ENCODE measurements at regions of chr14 and their contacts with region 1.

Region 1: GRCh38 chr14:53152890-53153701 is at the start of gene DDHD1:
- DNase-seq: peak; percentile 73 to 93 (median 85)
- ATAC-seq: peak; percentile 85
- H3K4me3 ChIP-seq: peak within 1 kb of the TSS; percentile 86 to 93
- H3K4me3 Mint-ChIP-seq: peak within 1 kb of the TSS; percentile 99
- H3K27ac ChIP-seq: peak within 1 kb of the TSS; percentile 77 to 85
- H3K27ac Mint-ChIP-seq: peak within 1 kb of the TSS; percentile 99
- H3K4me1 ChIP-seq: peaks cover 33% of the 10 kb centered on the region
- H3K4me1 Mint-ChIP-seq: peaks cover 49% of the 10 kb centered on the region
- H3K27me3 ChIP-seq: no peaks in the 10 kb centered on the region
- H3K27me3 Mint-ChIP-seq: no peaks in the 10 kb centered on the region
- CTCF ChIP-seq: no peak
- total RNA-seq, gene DDHD1: 40.1 to 44.3 TPM

Region 2: DNA sequence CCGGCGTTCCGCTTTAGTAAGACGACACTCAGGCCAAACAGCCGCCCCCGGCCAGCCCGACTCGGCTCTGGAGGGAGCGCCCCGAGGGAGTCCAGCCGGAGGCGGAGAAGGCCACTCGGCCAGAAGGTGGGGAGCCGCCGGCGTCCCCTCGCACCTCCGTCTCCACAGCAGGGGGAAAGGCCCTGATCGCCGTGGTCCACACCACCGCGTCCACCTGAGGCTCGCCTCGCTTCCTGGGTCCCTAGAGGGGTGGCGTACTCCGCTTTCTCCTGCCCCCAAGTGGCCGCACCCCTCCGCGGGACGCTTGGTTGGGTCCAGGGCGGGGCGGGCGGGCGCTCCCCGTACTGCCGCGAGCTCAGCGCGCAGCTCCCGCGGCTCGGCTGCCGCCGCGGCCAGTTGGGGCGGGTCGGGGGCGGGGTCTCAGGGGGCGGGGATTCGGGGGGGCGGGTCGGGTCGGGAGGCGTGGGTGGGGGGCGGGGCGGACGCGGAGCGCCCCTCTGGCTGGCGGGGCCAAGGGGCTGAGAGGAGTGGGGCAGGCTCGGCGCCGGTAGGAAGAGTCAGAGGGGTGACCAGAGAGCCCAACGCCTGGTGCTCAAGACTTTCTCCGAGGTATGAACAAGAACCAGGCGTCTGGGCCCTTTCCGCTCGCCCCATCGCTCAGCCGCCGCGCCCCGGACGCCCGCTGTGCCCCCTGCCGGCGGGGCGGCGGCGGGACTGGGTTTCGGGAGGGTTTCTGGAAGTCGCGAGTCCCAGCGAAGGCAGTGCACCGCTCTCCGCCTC is 1501.5 kb before region 1 on chr14 and contains the start of gene FRMD6:
- CTCF ChIA-PET with region 1: no interaction called
- POLR2A ChIA-PET with region 1: no interaction called
- intact Hi-C with region 1: loop called (anchors 5 to 10 kb)
- DNase-seq: peak; percentile 58 to 90 (median 76)
- ATAC-seq: peak; percentile 82
- H3K4me3 ChIP-seq: peak within 1 kb of the TSS; percentile 87 to 94
- H3K4me3 Mint-ChIP-seq: peak within 1 kb of the TSS; percentile 85
- H3K27ac ChIP-seq: peak within 1 kb of the TSS; percentile 55 to 73
- H3K27ac Mint-ChIP-seq: peak within 1 kb of the TSS; percentile 73
- H3K4me1 ChIP-seq: peaks cover 19% of the 10 kb centered on the region
- H3K4me1 Mint-ChIP-seq: peaks cover 17% of the 10 kb centered on the region
- H3K27me3 ChIP-seq: peaks cover 6 to 16% of the 10 kb centered on the region in 2 experiments
- H3K27me3 Mint-ChIP-seq: peaks cover 21% of the 10 kb centered on the region
- CTCF ChIP-seq: peak; percentile 70
- total RNA-seq, gene FRMD6: 2.4 to 3.5 TPM

Region 3: GRCh38 chr14:51939727-51940390 is 1213.2 kb before region 1 on chr14:
- CTCF ChIA-PET with region 1: no interaction called
- POLR2A ChIA-PET with region 1: no interaction called
- intact Hi-C with region 1: no loop called
- DNase-seq: peak in 1 of 9 experiments; percentile 42
- ATAC-seq: no peak
- H3K4me3 ChIP-seq: no peak overlapping the region
- H3K4me3 Mint-ChIP-seq: no peak overlapping the region
- H3K27ac ChIP-seq: peak overlapping the region in 1 of 2 experiments; percentile 47
- H3K27ac Mint-ChIP-seq: peak overlapping the region; percentile 39
- H3K4me1 ChIP-seq: no peaks in the 10 kb centered on the region
- H3K4me1 Mint-ChIP-seq: peaks cover 62% of the 10 kb centered on the region
- H3K27me3 ChIP-seq: no peaks in the 10 kb centered on the region
- H3K27me3 Mint-ChIP-seq: no peaks in the 10 kb centered on the region
- CTCF ChIP-seq: no peak

Region 4: DNA sequence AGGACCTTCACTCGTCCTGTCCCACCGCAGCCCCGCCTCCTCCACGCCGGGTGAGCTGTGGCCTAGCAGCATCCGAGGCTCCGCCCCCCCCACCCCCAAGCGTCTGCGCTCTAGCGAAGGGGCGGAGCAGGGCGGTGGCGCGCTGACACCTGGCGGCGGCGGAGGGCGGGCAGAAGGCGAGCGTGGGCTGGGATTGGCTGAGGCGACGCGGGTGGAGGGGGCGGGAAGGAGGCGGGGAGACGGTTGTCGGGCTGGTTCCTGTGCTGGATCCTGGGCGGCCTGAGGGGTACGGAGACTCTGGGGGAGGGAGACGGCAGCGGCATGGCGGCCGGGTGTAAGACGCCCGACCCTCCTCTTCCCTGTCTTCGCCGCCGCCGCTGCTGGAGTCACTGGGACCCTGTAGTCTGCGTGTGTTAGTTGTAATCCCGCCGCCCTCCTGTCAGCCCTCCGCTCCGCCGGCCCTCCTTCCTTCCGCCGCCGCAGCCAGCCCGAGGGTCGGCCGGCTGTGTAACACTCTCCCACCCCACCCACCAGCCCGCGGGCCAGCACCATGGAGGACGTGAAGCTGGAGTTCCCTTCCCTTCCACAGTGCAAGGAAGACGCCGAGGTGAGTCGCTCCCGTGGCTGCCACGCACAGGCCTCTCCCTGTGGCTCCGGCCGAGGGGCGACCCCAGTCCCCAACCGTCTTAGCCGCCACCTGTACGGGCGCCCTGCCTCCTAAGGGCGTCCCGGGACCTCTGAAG is 423.0 kb before region 1 on chr14 and contains the start of gene STYX:
- CTCF ChIA-PET with region 1: no interaction called
- POLR2A ChIA-PET with region 1: no interaction called
- intact Hi-C with region 1: loop called in 1 of 2 experiments (anchors 10 kb)
- DNase-seq: peak; percentile 97 to 99 (median 98)
- ATAC-seq: peak; percentile 96
- H3K4me3 ChIP-seq: peak within 1 kb of the TSS; percentile 87 to 98
- H3K4me3 Mint-ChIP-seq: peak within 1 kb of the TSS; percentile 89
- H3K27ac ChIP-seq: peak within 1 kb of the TSS; percentile 86
- H3K27ac Mint-ChIP-seq: peak within 1 kb of the TSS; percentile 93
- H3K4me1 ChIP-seq: peaks cover 17% of the 10 kb centered on the region
- H3K4me1 Mint-ChIP-seq: peaks cover 35% of the 10 kb centered on the region
- H3K27me3 ChIP-seq: no peaks in the 10 kb centered on the region
- H3K27me3 Mint-ChIP-seq: no peaks in the 10 kb centered on the region
- CTCF ChIP-seq: no peak
- total RNA-seq, gene STYX: 15.9 to 16.6 TPM

Region 5: GRCh38 chr14:52798826-52799225 is 354.3 kb before region 1 on chr14:
- CTCF ChIA-PET with region 1: no interaction called
- POLR2A ChIA-PET with region 1: no interaction called
- intact Hi-C with region 1: no loop called
- DNase-seq: no peak
- ATAC-seq: no peak
- H3K4me3 ChIP-seq: no peak overlapping the region
- H3K4me3 Mint-ChIP-seq: no peak overlapping the region
- H3K27ac ChIP-seq: no peak overlapping the region
- H3K27ac Mint-ChIP-seq: no peak overlapping the region
- H3K4me1 ChIP-seq: no peaks in the 10 kb centered on the region
- H3K4me1 Mint-ChIP-seq: peaks cover 13% of the 10 kb centered on the region
- H3K27me3 ChIP-seq: no peaks in the 10 kb centered on the region
- H3K27me3 Mint-ChIP-seq: no peaks in the 10 kb centered on the region
- CTCF ChIP-seq: no peak

Region 6: GRCh38 chr14:52918486-52918885 is 234.6 kb before region 1 on chr14:
- CTCF ChIA-PET with region 1: no interaction called
- POLR2A ChIA-PET with region 1: no interaction called
- intact Hi-C with region 1: loop called (anchors 2 to 10 kb)
- DNase-seq: peak in 5 of 9 experiments; percentile 8 to 85 (median 14)
- ATAC-seq: peak; percentile 95
- H3K4me3 ChIP-seq: no peak overlapping the region
- H3K4me3 Mint-ChIP-seq: no peak overlapping the region
- H3K27ac ChIP-seq: peak overlapping the region; percentile 28 to 84
- H3K27ac Mint-ChIP-seq: peak overlapping the region; percentile 85
- H3K4me1 ChIP-seq: peaks cover 25% of the 10 kb centered on the region
- H3K4me1 Mint-ChIP-seq: peaks cover 33% of the 10 kb centered on the region
- H3K27me3 ChIP-seq: no peaks in the 10 kb centered on the region
- H3K27me3 Mint-ChIP-seq: no peaks in the 10 kb centered on the region
- CTCF ChIP-seq: no peak

Region 7: GRCh38 chr14:53109105-53110041 is 43.7 kb before region 1 on chr14:
- CTCF ChIA-PET with region 1: interaction called, 16 read pairs
- POLR2A ChIA-PET with region 1: interaction called, 73 read pairs
- intact Hi-C with region 1: loop called (anchors 1 to 2 kb)
- DNase-seq: peak in 8 of 9 experiments; percentile 20 to 86 (median 54)
- ATAC-seq: peak; percentile 86
- H3K4me3 ChIP-seq: peak overlapping the region; percentile 51 to 57
- H3K4me3 Mint-ChIP-seq: no peak overlapping the region
- H3K27ac ChIP-seq: peak overlapping the region; percentile 47 to 88
- H3K27ac Mint-ChIP-seq: no peak overlapping the region
- H3K4me1 ChIP-seq: peaks cover 28% of the 10 kb centered on the region
- H3K4me1 Mint-ChIP-seq: peaks cover 32% of the 10 kb centered on the region
- H3K27me3 ChIP-seq: no peaks in the 10 kb centered on the region
- H3K27me3 Mint-ChIP-seq: no peaks in the 10 kb centered on the region
- CTCF ChIP-seq: no peak

Region 8: GRCh38 chr14:53217295-53217994 is 64.3 kb after region 1 on chr14:
- CTCF ChIA-PET with region 1: no interaction called
- POLR2A ChIA-PET with region 1: interaction called, 13 read pairs
- intact Hi-C with region 1: loop called (anchors 1 to 2 kb)
- DNase-seq: peak; percentile 48 to 81 (median 71)
- ATAC-seq: peak; percentile 95
- H3K4me3 ChIP-seq: peak overlapping the region; percentile 61 to 65
- H3K4me3 Mint-ChIP-seq: peak overlapping the region; percentile 91
- H3K27ac ChIP-seq: no peak overlapping the region
- H3K27ac Mint-ChIP-seq: peak overlapping the region; percentile 53
- H3K4me1 ChIP-seq: peaks cover 6% of the 10 kb centered on the region
- H3K4me1 Mint-ChIP-seq: peaks cover 9% of the 10 kb centered on the region
- H3K27me3 ChIP-seq: no peaks in the 10 kb centered on the region
- H3K27me3 Mint-ChIP-seq: no peaks in the 10 kb centered on the region
- CTCF ChIP-seq: peak; percentile 48

Measured in CD8-positive, alpha-beta T cell (primary cell).